HAP-1 (cell line): ENCODE measurements at regions of chr18 and their contacts with region 1.

Region 1: GRCh38 chr18:54444319-54444914 is 86.7 kb downstream of the C18orf54 start:
- DNase-seq: peak; percentile 78 to 80
- H3K4me3 ChIP-seq: no peak overlapping the region
- H3K4me1 ChIP-seq: peaks cover 8% of the 10 kb centered on the region; the same call in 1 of the 2 replicates
- H3K27me3 ChIP-seq: no peaks in the 10 kb centered on the region

Region 2: GRCh38 chr18:54075689-54076088 is 368.7 kb before region 1 on chr18:
- in situ Hi-C with region 1: no loop called
- DNase-seq: no peak
- H3K4me3 ChIP-seq: no peak overlapping the region
- H3K4me1 ChIP-seq: no peaks in the 10 kb centered on the region
- H3K27me3 ChIP-seq: no peaks in the 10 kb centered on the region; the same call in none of the 2 replicates

Region 3: DNA sequence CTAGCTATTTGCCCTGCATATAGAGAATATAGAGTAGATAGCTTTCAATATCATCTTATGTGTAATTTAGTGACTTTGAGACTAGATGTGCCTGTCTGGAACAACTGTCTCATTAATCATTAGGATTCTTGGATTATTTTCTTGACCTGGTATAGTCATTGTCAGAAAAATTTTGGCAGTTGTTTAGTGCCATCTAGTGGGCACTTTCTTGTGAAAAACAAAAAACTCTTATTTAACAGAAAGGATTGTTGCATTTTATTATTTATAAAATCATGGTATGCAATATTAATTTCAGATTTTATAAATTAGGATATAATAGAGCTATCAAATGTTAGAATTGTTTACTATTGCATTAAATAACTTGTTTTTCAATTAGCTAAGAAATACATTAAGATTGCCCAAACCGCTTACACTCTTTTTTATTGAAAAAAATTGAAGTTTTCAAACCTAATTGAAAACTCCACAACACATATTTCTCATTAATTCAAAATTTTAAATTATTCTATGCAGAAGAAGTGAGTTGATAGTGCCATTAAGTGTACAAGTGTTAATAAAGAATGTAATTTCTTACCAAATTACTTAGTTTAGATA is 227.0 kb after region 1 on chr18:
- in situ Hi-C with region 1: loop called (anchors 25 kb)
- DNase-seq: peak in 1 of 2 experiments; percentile 56
- H3K4me3 ChIP-seq: no peak overlapping the region
- H3K4me1 ChIP-seq: no peaks in the 10 kb centered on the region
- H3K27me3 ChIP-seq: no peaks in the 10 kb centered on the region

Region 4: GRCh38 chr18:54983041-54983686 is 538.7 kb after region 1 on chr18:
- in situ Hi-C with region 1: loop called (anchors 25 kb)
- DNase-seq: peak; percentile 11 to 72
- H3K4me3 ChIP-seq: no peak overlapping the region
- H3K4me1 ChIP-seq: no peaks in the 10 kb centered on the region
- H3K27me3 ChIP-seq: no peaks in the 10 kb centered on the region